Upper lobe of right lung (tissue), 1 donor: ENCODE measurements at regions of chr10 and their contacts with region 1.

Region 1: DNA sequence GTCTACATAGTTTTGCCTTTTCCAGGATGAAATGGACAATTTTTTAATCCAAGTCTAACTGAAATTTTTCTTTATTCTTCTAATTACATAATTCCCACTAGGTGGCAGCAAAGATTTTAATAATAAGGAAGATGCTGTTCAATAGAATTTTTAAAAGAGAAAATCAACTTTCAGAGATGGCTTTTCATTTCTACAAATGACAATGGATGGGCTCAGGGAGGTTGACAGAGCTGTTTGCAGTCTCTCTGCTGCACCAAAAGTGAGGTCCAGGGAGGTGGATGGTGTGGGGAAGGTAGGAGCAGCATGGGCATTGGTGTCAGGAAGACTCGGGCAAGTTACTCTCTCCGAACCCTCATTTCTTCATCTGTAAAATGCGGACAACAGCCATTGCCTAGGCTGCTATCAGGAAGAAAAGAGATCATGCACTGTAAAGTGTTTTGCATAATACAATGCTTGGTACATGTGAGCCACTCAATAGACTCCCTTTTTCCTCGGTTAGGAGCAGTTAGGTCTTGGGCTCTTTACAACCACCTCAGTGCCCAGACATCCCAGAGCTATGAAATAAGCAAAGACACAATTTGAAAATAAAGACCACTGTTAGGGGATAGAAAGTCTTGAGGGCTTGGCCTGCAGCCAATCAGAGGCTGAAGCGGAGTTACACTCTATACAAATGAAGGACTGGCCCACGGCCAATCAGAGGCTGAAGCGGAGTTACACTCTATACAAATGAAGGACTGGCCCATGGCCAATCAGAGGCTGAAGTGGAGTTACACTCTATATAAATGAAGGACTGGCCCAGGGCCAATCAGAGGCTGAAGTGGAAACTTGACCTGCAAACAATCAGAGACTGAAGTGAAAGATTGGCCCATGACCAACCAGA is 107.1 kb downstream of the ABLIM1 start:
- DNase-seq: peak; percentile 78
- ATAC-seq: peak; percentile 54
- H3K4me3 ChIP-seq: peak overlapping the region; percentile 32
- H3K27ac ChIP-seq: peak overlapping the region; percentile 55
- H3K4me1 ChIP-seq: peaks cover 17% of the 10 kb centered on the region
- H3K27me3 ChIP-seq: no peaks in the 10 kb centered on the region
- CTCF ChIP-seq: peak; percentile 58

Region 2: GRCh38 chr10:114694752-114695151 is 143.8 kb after region 1 on chr10:
- intact Hi-C with region 1: loop called (anchors 10 kb)
- DNase-seq: no peak
- ATAC-seq: peak; percentile 53
- H3K4me3 ChIP-seq: no peak overlapping the region
- H3K27ac ChIP-seq: no peak overlapping the region
- H3K4me1 ChIP-seq: peaks cover 13% of the 10 kb centered on the region
- H3K27me3 ChIP-seq: no peaks in the 10 kb centered on the region
- CTCF ChIP-seq: peak; percentile 56

Region 3: GRCh38 chr10:114779803-114780609 is 229.0 kb after region 1 on chr10:
- intact Hi-C with region 1: loop called (anchors 10 kb)
- DNase-seq: no peak
- ATAC-seq: no peak
- H3K4me3 ChIP-seq: no peak overlapping the region
- H3K27ac ChIP-seq: peak overlapping the region; percentile 49
- H3K4me1 ChIP-seq: peaks cover 13% of the 10 kb centered on the region
- H3K27me3 ChIP-seq: no peaks in the 10 kb centered on the region
- CTCF ChIP-seq: no peak